ENCODE measurements at regions of chr2 and their contacts with region 1.

Region 1: DNA sequence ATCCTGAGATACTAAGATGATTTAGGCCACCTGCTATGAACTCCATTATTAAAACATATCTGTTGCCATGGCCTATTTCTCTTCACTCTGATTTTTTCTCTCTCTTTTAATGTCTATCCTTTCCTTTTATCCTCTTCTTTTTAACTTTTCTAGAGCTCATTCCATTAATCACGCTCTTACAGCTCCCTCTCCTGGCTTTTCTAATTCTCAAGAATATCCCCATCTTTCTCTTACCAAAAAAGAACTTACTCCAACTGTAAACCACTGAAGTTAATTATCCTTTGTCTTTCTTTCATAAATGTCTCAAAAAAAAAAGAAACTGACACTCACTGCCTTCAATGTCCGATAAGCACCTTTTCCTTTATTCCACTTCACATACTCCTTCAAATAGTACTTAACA is 7.9 kb downstream of the PPP3R1 start:
- DNase-seq: no peak
- ATAC-seq: no peak
- H3K4me3 ChIP-seq: no peak overlapping the region
- H3K27ac ChIP-seq: no peak overlapping the region
- H3K4me1 ChIP-seq: peaks cover 96% of the 10 kb centered on the region
- H3K27me3 ChIP-seq: no peaks in the 10 kb centered on the region
- CTCF ChIP-seq: peak; percentile 21

Region 2: GRCh38 chr2:68203587-68203986 is 40.9 kb before region 1 on chr2:
- intact Hi-C with region 1: loop called in 1 of 2 experiments (anchors 5 kb)
- DNase-seq: no peak
- ATAC-seq: no peak
- H3K4me3 ChIP-seq: peak overlapping the region; percentile 22
- H3K27ac ChIP-seq: peak overlapping the region; percentile 70
- H3K4me1 ChIP-seq: peaks cover 54% of the 10 kb centered on the region
- H3K27me3 ChIP-seq: no peaks in the 10 kb centered on the region
- CTCF ChIP-seq: no peak

Measured in psoas muscle (tissue), 8 donors.